ENCODE measurements at regions of chr7 and their contacts with region 1.

Region 1: DNA sequence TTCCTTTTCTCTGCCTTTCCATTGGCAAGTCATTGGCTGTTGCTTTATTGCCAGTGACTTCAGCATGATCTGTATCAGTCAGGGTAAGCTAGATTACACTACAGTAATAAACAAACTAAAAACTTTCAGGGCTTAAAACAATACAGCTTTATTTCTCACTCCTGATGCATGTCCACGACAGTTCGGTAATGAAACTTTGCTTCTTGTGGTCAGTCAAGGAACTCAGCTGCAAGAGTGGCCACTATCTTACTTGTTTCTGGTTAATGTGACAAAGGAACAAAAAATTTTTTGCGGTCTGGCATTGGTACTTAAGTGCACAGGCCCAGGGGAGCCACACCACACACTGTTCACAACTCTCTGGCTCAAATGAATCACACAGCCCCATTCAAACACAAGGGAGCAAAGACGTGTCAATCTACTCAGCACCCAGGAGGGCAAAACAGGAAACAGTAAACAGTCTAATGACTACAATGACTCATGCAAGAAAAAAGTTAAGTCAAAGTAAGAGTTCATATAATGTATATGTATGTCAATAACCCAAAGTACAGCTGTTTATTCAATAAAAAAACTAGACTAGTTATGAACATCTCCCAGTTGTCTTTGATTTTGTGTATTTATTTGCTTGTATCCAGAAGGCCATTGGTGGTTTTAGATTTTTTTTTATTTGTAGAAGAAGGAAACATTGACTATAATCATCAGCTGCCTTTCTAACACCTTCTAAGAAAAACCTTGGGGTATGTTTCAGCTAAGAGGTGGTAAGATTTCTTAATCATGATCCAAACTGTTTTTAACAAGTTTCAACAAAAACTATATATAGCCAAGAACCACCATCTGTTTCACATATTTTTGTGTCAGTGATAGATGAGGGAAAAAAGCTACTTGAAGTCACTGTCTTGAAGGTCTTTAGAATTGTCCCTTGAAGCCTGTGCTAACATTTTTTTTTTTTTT is 134.4 kb upstream of the FAM3C start:
- DNase-seq: peak; percentile 99
- ATAC-seq: peak; percentile 98
- H3K4me3 ChIP-seq: no peak overlapping the region
- H3K27ac ChIP-seq: peak overlapping the region; percentile 80
- H3K4me1 ChIP-seq: peaks cover 17% of the 10 kb centered on the region; the same call in 1 of the 2 replicates
- H3K27me3 ChIP-seq: no peaks in the 10 kb centered on the region
- CTCF ChIP-seq: no peak
- EP300 ChIP-seq: peak; percentile 99 to 100
- POLR2A ChIP-seq: no peak
- RAD21 ChIP-seq: no peak

Region 2: DNA sequence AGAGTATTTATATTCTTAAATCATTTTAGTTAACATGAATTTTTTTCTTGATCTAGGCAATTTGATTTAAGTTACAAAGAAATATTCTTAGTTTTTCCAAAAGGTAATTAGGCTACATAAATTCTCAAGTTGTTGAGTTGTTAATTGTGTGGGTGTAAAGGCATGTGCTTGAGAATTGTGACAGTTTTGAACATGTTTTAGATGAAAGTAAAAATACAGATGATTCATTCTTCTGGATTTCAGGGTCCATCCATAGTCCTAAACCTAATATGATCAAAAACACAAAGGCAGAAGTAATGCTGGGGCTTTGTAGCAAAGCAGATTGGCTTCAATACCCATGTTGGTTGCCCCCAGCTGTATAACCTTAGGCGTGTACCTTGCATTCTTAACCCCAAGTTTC is 414.1 kb before region 1 on chr7:
- CTCF ChIA-PET with region 1: no interaction called
- POLR2A ChIA-PET with region 1: no interaction called
- RAD21 ChIA-PET with region 1: no interaction called
- SMC1A ChIA-PET with region 1: no interaction called
- in situ Hi-C with region 1: no loop called
- intact Hi-C with region 1: no loop called
- DNase-seq: no peak
- ATAC-seq: no peak
- H3K4me3 ChIP-seq: no peak overlapping the region
- H3K27ac ChIP-seq: no peak overlapping the region
- H3K4me1 ChIP-seq: no peaks in the 10 kb centered on the region
- H3K27me3 ChIP-seq: no peaks in the 10 kb centered on the region; a peak in 1 of 4 replicates
- CTCF ChIP-seq: no peak
- EP300 ChIP-seq: no peak
- POLR2A ChIP-seq: no peak
- RAD21 ChIP-seq: no peak

Region 3: DNA sequence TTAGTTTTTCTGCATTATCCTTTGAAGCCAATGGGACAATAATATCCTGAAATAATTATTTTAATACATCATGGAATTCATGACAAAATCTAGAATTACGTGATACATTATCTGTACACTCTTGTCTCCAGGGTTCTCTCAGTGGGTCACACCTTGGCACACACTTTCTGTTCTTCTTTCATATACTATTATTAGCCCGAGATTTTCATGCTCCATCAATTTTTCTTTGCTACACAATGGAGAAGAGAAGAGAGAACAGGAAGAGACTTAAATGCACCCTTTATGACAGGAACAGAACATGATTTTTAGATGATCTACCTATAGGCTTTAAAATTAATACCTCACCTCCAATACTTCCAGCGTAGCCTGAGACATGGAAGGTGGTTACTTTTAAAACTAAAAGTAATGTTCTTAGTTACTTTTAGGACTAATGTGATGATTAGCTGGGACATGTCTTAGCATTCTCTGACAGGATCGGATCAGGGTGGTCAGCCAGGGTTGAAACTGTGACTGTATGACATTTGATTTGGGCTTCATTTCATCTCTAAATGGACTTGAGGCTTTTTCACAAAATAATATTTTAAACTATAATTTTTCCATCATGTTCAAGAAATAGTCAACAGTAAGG is 350.0 kb before region 1 on chr7:
- CTCF ChIA-PET with region 1: no interaction called
- POLR2A ChIA-PET with region 1: no interaction called
- RAD21 ChIA-PET with region 1: interaction called, 3 read pairs
- SMC1A ChIA-PET with region 1: no interaction called
- in situ Hi-C with region 1: no loop called
- intact Hi-C with region 1: loop called (anchors 5 kb)
- DNase-seq: peak; percentile 79
- ATAC-seq: peak; percentile 98
- H3K4me3 ChIP-seq: no peak overlapping the region
- H3K27ac ChIP-seq: peak overlapping the region; percentile 62
- H3K4me1 ChIP-seq: peaks cover 11% of the 10 kb centered on the region
- H3K27me3 ChIP-seq: no peaks in the 10 kb centered on the region
- CTCF ChIP-seq: no peak
- EP300 ChIP-seq: peak; percentile 90 to 93; a peak in 3 of 4 replicates
- POLR2A ChIP-seq: no peak
- RAD21 ChIP-seq: no peak

Region 4: DNA sequence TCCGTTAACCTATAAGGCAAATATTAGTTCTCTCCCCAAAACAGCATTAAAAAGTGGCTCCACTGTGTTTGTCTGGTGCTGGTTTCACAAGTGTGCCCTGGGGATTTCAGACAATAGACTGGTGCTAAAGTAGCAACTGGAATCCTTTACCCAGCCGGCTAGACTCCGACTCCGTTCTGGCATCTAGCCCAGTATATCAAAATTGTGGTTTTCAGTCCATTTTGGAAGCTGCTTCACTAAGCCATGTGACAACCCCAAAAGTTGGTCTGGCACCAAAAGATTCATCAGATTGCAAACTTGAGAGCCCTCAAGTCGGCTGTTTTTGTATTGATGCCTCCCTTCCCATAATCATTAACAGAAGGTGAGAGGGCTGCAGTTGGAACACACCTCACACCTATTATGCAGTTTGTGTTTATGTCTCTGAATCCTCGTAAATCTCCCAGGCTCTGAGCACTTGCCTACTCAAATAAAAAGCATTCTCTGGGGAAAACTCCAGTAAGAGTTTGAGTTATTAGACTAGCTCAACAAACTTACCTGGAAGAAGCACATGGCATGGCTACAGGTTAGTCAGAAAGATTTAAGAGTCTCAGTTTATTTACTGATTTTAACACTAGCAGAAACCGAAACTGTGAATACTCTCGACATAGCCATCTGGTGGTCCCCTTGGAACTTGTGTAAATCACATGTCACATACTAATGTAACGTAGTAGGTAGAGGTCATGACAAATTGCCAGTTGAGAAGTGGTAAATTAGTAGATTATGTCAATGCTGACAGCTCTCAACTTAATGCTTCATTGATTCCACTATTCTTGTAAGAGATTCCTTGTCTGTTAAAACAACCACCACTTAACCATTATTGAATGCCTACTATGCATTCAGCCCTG is 216.5 kb before region 1 on chr7:
- CTCF ChIA-PET with region 1: no interaction called
- POLR2A ChIA-PET with region 1: interaction called, 3 read pairs
- RAD21 ChIA-PET with region 1: interaction called, 3 read pairs
- SMC1A ChIA-PET with region 1: interaction called, 14 read pairs
- in situ Hi-C with region 1: no loop called
- intact Hi-C with region 1: loop called (anchors 10 kb)
- DNase-seq: peak; percentile 50
- ATAC-seq: peak; percentile 91
- H3K4me3 ChIP-seq: no peak overlapping the region
- H3K27ac ChIP-seq: no peak overlapping the region
- H3K4me1 ChIP-seq: peaks cover 12% of the 10 kb centered on the region
- H3K27me3 ChIP-seq: no peaks in the 10 kb centered on the region
- CTCF ChIP-seq: no peak
- EP300 ChIP-seq: peak; percentile 74 to 85; a peak in 3 of 4 replicates
- POLR2A ChIP-seq: no peak
- RAD21 ChIP-seq: 0 out of 2 replicates have a peak, but pooled peaks have one; percentile 12

Region 5: DNA sequence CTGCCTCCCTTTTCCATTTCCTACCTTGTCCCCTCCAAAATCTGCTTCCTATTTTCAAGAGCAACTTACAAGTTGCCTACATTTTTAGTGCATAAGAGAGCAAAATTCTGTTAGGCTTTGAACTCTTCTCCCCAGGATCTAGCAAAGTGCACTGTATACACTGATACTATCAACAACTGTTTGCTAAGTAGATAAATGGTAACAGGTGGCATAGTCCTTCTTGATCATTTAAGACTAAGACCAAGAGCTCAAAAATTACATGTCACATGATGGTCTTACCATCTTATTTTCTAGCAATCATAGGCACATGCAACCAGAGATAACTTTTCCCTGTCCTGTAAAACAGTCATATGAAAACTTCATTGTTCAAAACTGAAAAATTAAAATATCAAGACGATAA is 150.6 kb before region 1 on chr7:
- CTCF ChIA-PET with region 1: interaction called, 5 read pairs
- POLR2A ChIA-PET with region 1: interaction called, 22 read pairs
- RAD21 ChIA-PET with region 1: interaction called, 133 read pairs
- SMC1A ChIA-PET with region 1: interaction called, 56 read pairs
- in situ Hi-C with region 1: no loop called
- intact Hi-C with region 1: loop called (anchors 1 kb)
- DNase-seq: no peak
- ATAC-seq: no peak
- H3K4me3 ChIP-seq: no peak overlapping the region
- H3K27ac ChIP-seq: no peak overlapping the region
- H3K4me1 ChIP-seq: peaks cover 25% of the 10 kb centered on the region
- H3K27me3 ChIP-seq: no peaks in the 10 kb centered on the region
- CTCF ChIP-seq: no peak
- EP300 ChIP-seq: no peak
- POLR2A ChIP-seq: no peak
- RAD21 ChIP-seq: no peak

Region 6: DNA sequence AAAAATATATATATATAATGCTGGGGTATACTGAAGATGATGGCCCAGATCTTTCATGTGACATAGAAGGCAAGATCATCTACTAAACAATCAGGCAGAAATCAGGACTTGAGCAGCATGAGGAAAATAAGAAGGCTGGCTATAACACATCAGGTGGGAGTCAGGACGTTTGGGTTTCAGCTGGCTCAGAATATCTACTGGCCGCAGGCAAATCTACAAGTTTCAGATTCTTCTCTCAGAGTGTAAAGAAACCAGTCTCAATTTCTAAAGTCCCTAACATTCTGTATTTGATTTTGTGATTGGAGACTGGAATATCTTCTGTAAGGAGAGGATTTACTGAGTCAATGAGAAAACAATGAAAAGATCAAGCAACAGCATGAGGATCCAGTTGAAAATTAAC is 96.7 kb before region 1 on chr7:
- CTCF ChIA-PET with region 1: interaction called, 5 read pairs
- POLR2A ChIA-PET with region 1: interaction called, 7 read pairs
- RAD21 ChIA-PET with region 1: interaction called, 11 read pairs
- SMC1A ChIA-PET with region 1: interaction called, 20 read pairs
- in situ Hi-C with region 1: no loop called
- intact Hi-C with region 1: loop called (anchors 2 kb)
- DNase-seq: peak; percentile 16
- ATAC-seq: peak; percentile 68
- H3K4me3 ChIP-seq: no peak overlapping the region
- H3K27ac ChIP-seq: no peak overlapping the region; the same call in 1 of the 2 replicates
- H3K4me1 ChIP-seq: peaks cover 26% of the 10 kb centered on the region
- H3K27me3 ChIP-seq: no peaks in the 10 kb centered on the region
- CTCF ChIP-seq: no peak
- EP300 ChIP-seq: no peak
- POLR2A ChIP-seq: no peak
- RAD21 ChIP-seq: no peak

Region 7: DNA sequence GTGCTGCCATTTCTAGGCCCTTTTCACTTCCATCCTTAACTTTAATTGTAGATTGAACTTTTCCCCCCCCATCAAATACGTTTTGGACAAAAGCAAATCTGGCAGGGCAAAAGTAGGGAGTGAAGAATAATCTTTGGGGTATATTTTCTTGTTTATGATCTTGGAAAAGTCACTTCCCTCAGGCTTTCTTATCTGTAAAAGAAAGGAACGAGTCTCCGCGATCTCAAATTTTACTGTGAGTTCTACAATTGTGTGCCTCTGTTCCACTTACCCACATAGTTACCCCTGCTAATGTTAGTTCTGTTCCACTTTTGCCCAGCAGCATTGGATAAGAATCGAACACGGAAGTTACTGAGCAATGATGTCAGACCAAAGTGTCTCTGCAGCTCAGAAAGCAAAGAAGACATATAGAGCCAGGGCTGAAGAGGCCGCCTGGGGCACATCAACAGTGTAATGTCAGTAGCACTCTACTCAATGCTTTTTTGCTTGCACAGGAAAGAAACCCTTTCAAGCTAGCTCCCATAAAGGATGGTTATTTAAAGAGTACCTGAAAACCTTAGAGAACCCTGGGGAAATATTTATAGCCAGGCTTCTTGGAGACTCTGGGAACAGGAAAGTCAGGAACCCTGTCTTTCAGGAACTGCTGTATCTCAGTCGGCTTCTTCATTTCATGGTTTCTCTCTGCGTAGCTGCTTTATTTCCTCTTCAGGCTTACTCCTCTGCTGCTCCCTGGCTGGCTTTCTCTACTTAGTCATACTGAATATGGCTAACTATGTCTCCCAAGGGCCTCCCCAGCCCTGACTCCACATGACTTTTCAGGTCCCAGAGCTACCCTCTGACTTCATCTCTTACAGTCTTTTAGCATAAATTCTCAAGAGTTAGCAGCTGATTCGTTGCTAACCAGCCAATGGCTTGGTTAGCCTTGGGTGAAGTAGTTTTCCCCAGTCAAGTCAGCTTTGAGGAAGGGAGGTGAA is 10.7 kb before region 1 on chr7:
- CTCF ChIA-PET with region 1: interaction called, 17 read pairs
- POLR2A ChIA-PET with region 1: interaction called, 3 read pairs
- RAD21 ChIA-PET with region 1: interaction called, 13 read pairs
- SMC1A ChIA-PET with region 1: interaction called, 14 read pairs
- in situ Hi-C with region 1: no loop called
- intact Hi-C with region 1: no loop called
- DNase-seq: no peak
- ATAC-seq: peak; percentile 74
- H3K4me3 ChIP-seq: no peak overlapping the region
- H3K27ac ChIP-seq: no peak overlapping the region
- H3K4me1 ChIP-seq: no peaks in the 10 kb centered on the region
- H3K27me3 ChIP-seq: no peaks in the 10 kb centered on the region
- CTCF ChIP-seq: no peak
- EP300 ChIP-seq: no peak
- POLR2A ChIP-seq: no peak
- RAD21 ChIP-seq: no peak